Activated naive CD4-positive, alpha-beta T cell treated with anti-CD3 and anti-CD28 coated beads for 36 hours (primary cell): ENCODE measurements at regions of chr16 and their contacts with region 1.

Region 1: GRCh38 chr16:67660564-67661028 is at the start of gene PARD6A:
- DNase-seq: peak; percentile 97
- H3K4me3 Mint-ChIP-seq: peak within 1 kb of the TSS; percentile 90
- H3K27ac Mint-ChIP-seq: peak within 1 kb of the TSS; percentile 92
- H3K4me1 Mint-ChIP-seq: peaks cover 21% of the 10 kb centered on the region
- H3K27me3 Mint-ChIP-seq: no peaks in the 10 kb centered on the region
- total RNA-seq, gene PARD6A: 7.3 to 8.4 TPM

Region 2: GRCh38 chr16:67226804-67227557 is 433.6 kb before region 1 on chr16 and contains the start of gene TMEM208:
- CTCF ChIA-PET with region 1: no interaction called
- intact Hi-C with region 1: loop called (anchors 2 kb)
- DNase-seq: peak; percentile 99
- H3K4me3 Mint-ChIP-seq: peak within 1 kb of the TSS; percentile 100
- H3K27ac Mint-ChIP-seq: peak within 1 kb of the TSS; percentile 96
- H3K4me1 Mint-ChIP-seq: peaks cover 51% of the 10 kb centered on the region
- H3K27me3 Mint-ChIP-seq: no peaks in the 10 kb centered on the region
- total RNA-seq, gene TMEM208: 24.6 to 29.4 TPM

Region 3: DNA sequence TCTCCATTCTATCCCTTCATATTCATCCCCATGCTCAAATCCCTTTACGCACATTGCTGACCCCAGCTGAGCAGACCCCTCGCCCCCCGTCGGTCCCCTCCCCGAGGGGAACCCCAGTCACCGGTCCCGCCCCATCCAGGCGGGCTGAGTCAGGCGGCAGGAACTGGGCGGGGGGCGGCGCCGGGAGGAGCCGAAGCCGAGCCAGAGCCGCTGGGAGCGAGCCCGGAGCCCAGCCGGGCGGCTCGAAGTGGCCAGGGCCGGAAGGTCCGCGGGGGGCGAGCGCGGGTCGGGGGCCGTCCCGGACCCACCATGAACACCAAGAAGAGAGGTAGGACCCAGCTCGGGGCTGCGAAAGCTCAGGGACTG is 123.3 kb before region 1 on chr16:
- CTCF ChIA-PET with region 1: no interaction called
- intact Hi-C with region 1: loop called (anchors 2 kb)
- DNase-seq: peak; percentile 71
- H3K4me3 Mint-ChIP-seq: peak overlapping the region; percentile 79
- H3K27ac Mint-ChIP-seq: peak overlapping the region; percentile 75
- H3K4me1 Mint-ChIP-seq: peaks cover 21% of the 10 kb centered on the region
- H3K27me3 Mint-ChIP-seq: peaks cover 2% of the 10 kb centered on the region

Region 4: GRCh38 chr16:67641779-67642708 is 18.6 kb before region 1 on chr16:
- CTCF ChIA-PET with region 1: interaction called, 26 read pairs
- intact Hi-C with region 1: loop called (anchors 1 kb)
- DNase-seq: no peak
- H3K4me3 Mint-ChIP-seq: no peak overlapping the region
- H3K27ac Mint-ChIP-seq: no peak overlapping the region
- H3K4me1 Mint-ChIP-seq: peaks cover 9% of the 10 kb centered on the region
- H3K27me3 Mint-ChIP-seq: no peaks in the 10 kb centered on the region

Region 5: DNA sequence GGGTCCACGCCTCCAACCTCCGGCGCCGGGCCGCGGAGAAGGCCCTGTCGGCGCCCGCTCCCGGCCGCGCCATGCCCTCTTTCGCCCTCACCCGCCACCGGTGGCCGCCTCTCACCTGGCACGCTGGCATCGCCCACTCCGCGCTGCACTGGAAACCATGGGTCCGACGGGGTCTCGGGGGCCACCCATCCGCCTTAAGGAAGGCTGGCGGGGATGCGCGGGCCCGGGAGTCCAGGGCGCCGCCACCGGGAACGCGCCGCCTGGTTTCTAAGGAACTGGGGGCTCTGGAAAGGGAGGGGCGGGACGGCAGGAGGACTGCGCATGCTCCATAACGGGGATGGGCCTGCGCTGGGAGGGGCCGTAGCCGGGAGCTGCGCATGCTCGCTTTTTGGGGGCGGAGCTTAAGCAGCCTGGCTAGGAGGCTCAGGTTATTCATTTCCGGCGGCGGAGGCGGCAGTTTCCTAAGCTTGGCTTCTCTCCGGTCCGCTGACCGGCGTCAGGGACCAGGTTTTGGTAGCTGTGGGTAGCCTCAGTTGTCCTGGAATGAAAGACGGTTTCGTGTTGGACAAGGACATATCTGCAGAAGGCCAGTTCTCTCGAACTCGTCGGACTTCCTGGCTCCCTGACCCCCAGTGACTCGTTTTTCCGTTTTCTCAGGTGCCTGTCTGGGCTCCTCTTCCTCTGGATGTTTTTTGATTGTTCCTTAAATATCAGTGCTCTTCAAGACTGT is 58.6 kb after region 1 on chr16 and contains the start of gene GFOD2:
- CTCF ChIA-PET with region 1: interaction called, 3 read pairs
- intact Hi-C with region 1: loop called (anchors 2 kb)
- DNase-seq: peak; percentile 99
- H3K4me3 Mint-ChIP-seq: peak within 1 kb of the TSS; percentile 96
- H3K27ac Mint-ChIP-seq: peak within 1 kb of the TSS; percentile 96
- H3K4me1 Mint-ChIP-seq: peaks cover 36% of the 10 kb centered on the region
- H3K27me3 Mint-ChIP-seq: no peaks in the 10 kb centered on the region
- total RNA-seq, gene GFOD2: 7.3 to 8.2 TPM

Region 6: DNA sequence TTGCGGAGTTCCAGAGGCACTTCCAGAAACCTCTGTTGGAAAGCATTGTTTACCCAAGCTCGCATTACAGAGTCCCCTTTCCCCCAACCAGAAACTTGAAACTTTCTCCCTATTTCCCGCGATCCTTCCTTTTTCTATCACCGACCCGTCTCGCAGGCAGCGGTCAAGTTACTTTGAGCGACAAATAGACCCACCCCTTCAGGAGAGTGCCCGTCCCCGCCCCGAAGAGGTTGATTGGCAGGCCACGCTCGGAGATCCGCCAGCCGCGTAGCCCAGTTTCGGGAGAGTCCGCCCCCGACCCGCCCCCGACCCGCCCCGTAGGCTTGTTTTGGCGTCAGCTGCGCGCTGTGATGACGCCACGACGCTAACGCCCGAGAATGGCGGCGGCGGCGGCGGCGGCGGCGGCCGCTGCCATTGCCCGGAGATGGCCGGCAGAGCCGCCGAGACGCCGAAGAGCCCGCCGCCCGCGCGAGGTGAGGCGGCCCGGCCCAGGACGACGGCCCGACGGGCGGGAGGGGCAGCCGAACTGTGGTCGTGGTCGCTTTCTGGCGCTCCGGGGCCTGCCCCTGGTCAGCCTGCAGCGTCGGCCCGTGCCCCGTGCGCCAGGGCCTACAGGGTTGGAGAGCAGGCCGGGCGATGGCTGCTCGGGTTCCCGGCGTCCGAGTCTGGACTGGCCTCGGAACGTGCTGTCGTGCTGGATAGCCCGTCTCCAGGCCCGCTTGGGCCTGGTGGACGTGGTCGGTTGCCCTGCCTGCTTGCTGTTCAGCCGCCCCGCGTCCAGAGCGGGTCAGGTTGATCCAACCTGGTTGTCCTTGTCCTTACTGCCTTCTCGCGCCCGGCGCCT is 232.5 kb after region 1 on chr16 and contains the start of gene PSKH1:
- CTCF ChIA-PET with region 1: no interaction called
- intact Hi-C with region 1: loop called (anchors 2 kb)
- DNase-seq: peak; percentile 98
- H3K4me3 Mint-ChIP-seq: peak within 1 kb of the TSS; percentile 79
- H3K27ac Mint-ChIP-seq: peak within 1 kb of the TSS; percentile 82
- H3K4me1 Mint-ChIP-seq: peaks cover 39% of the 10 kb centered on the region
- H3K27me3 Mint-ChIP-seq: no peaks in the 10 kb centered on the region
- total RNA-seq, gene PSKH1: 7.1 to 8.0 TPM

Region 7: DNA sequence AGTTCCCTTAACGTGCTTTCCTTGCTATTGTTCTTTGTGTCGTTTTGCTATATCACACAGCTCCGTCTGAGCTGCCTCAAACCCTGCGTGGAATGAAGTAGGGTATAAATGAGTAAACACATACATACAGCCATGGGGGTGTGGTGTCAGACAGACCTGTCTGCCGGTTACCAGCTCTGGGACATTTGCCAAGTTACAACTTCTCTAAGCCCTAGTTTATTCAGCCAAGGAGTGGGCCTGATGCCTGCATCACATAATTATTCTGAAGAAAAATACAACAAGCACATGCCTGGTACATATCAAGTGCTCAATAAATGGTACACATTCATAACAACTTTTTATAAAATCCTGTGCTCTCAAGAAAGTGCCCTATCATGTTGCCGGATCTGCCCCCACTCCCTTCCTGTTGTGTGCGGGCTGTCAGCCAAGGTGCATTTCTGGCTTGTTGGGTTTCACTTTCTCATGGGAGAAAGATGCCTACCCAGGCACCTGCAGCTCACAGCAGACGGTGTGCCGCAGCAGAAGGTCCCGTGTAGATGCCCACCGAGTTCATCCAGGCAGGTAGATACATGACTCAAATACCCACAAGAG is 757.2 kb after region 1 on chr16:
- CTCF ChIA-PET with region 1: no interaction called
- intact Hi-C with region 1: no loop called
- DNase-seq: peak; percentile 89
- H3K4me3 Mint-ChIP-seq: peak overlapping the region; percentile 66
- H3K27ac Mint-ChIP-seq: peak overlapping the region; percentile 92
- H3K4me1 Mint-ChIP-seq: peaks cover 52% of the 10 kb centered on the region
- H3K27me3 Mint-ChIP-seq: no peaks in the 10 kb centered on the region